AG04450 (cell line): ENCODE measurements at regions of chr12 and their contacts with region 1.

Region 1: GRCh38 chr12:114166362-114166761 is 200.2 kb upstream of the RBM19 start:
- DNase-seq: peak; percentile 6
- H3K4me3 ChIP-seq: no peak overlapping the region
- H3K27ac ChIP-seq: no peak overlapping the region
- H3K27me3 ChIP-seq: no peaks in the 10 kb centered on the region
- CTCF ChIP-seq: peak; percentile 68

Region 2: GRCh38 chr12:114131824-114132223 is 34.5 kb before region 1 on chr12:
- CTCF ChIA-PET with region 1: no interaction called
- POLR2A ChIA-PET with region 1: no interaction called
- DNase-seq: no peak
- H3K4me3 ChIP-seq: no peak overlapping the region
- H3K27ac ChIP-seq: no peak overlapping the region
- H3K27me3 ChIP-seq: peaks cover 3% of the 10 kb centered on the region
- CTCF ChIP-seq: 0 out of 2 replicates have a peak, but pooled peaks have one; percentile 9

Region 3: DNA sequence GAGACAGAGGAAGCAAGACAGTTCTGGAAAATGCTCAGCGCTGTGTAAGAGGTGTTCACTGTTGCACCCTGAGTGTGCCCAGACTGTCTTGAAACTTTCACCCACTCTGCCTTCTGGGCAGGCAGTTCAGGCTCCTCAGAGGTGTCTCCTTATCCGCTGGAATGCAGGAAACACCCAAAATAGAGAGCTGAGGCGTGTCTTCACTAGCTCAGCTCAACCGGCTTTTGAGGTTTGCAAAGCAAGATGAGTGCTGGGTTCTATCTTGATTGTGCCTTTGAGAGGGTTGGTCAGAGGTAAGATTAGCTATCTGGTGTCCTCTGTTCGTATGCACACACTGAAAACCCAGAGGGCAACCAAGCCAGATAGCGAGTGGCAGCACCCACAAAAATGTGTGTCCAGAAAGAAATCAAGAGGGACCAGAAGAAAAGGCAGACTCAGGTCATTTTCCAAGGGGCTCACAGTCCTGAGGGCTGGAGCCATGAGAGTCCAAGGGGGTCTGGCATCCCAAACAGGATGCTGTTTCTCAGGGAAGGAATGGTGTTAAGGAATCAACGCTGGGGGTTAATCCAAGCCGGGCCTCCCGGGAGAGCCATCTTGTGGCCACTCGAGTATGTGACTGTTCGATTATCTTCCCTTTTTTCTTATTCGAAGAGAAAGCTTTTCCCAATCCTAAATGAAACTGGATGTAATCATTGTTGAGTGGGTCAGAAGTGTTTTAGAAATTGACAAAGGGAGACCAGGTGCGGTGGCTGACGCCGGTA is 470.5 kb after region 1 on chr12:
- CTCF ChIA-PET with region 1: interaction called, 18 read pairs
- POLR2A ChIA-PET with region 1: no interaction called
- DNase-seq: no peak
- H3K4me3 ChIP-seq: no peak overlapping the region
- H3K27ac ChIP-seq: no peak overlapping the region
- H3K27me3 ChIP-seq: peaks cover 2% of the 10 kb centered on the region
- CTCF ChIP-seq: peak; percentile 64